ENCODE measurements at regions of chr6 and their contacts with region 1.

Region 1: GRCh38 chr6:104799134-104799657 is 60.5 kb downstream of the HACE1 start:
- DNase-seq: no peak
- H3K4me3 ChIP-seq: no peak overlapping the region
- H3K27ac ChIP-seq: no peak overlapping the region
- H3K4me1 ChIP-seq: peaks cover 0 to 5% (median 0%) of the 10 kb centered on the region in 4 experiments
- H3K27me3 ChIP-seq: no peaks in the 10 kb centered on the region

Region 2: GRCh38 chr6:104813552-104813951 is 14.4 kb after region 1 on chr6:
- CTCF ChIA-PET with region 1: interaction called, 11 read pairs
- POLR2A ChIA-PET with region 1: no interaction called
- DNase-seq: no peak
- H3K4me3 ChIP-seq: no peak overlapping the region
- H3K27ac ChIP-seq: no peak overlapping the region
- H3K4me1 ChIP-seq: no peaks in the 10 kb centered on the region
- H3K27me3 ChIP-seq: no peaks in the 10 kb centered on the region